Mammary epithelial cell (primary cell): ENCODE measurements at regions of chr10 and their contacts with region 1.

Region 1: DNA sequence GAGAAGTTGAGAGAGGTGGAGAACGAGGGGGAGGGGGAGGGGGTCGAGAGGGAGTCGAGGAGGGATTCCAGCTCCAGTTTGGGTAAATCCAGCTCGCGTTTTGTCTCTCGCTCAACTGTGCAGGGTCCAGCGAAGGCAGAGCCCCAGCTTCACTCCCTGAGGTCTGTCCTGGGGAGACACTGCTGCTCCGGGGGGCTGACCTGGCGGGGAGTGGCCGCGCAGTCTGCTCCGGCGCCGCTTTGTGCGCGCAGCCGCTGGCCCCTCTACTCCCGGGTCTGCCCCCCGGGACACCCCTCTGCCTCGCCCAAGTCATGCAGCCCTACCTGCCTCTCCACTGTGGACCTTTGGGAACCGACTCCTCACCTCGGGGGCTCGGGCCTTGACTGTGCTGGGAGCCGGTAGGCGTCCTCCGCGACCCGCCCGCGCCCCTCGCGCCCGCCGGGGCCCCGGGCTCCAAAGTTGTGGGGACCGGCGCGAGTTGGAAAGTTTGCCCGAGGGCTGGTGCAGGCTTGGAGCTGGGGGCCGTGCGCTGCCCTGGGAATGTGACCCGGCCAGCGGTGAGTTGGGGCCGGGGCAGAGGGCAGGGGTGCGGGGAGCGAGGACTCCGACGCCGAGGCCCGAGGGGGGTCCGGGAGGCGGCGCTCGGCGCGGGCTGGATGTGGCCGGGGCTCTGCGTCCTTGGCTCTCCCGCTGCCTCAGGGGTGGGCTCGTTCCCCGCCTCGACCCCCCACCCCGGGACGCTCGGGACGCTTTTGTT is at the start of gene TET1:
- DNase-seq: peak; percentile 35
- H3K4me3 ChIP-seq: peak within 1 kb of the TSS; percentile 50 to 59 (median 59)
- H3K27ac ChIP-seq: no peak within 1 kb of the TSS
- H3K4me1 ChIP-seq: peaks cover 6% of the 10 kb centered on the region
- H3K27me3 ChIP-seq: no peaks in the 10 kb centered on the region
- CTCF ChIP-seq: no peak
- total RNA-seq, gene TET1: 0.75 to 1.8 TPM

Region 2: DNA sequence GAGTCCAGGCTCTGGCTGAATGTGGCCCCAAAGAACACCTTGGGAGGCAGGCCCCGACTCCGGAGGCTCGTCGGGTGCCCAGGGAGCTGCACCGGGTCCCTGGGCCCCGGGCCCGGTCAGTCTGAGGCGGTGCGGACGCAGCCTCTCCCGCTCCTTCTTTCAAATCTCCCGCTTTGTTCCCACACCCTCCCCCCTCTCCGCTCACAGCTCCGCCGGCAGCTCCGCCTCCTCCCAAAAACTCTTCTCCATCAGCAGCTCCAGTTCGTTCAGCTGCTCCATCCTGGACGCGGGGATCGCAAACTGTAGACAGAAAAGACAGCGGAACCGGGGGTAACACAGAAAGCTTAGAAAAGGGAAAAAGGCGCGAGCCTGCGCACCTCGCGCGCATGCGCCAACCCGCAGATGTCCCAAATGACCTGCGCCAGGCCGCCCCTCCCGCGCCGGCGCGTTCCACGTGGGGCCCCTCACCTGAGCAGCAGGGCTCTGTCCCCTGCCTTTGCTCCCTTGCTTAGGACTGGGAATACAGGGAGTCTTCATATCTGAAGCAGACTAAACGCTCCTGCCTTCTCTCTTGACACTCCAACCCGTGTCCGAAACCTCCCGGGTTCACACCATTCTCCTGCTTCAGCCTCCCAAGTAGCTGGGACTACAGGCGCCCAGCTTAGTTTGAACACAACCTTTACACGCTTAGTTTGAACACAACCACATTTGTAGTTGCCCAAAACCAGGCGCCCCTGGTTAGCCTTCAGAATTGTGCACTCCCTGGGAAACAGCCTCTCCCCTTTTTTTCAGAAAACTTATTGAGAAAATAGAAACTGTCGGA is 88.6 kb before region 1 on chr10 and contains the start of gene DNA2:
- CTCF ChIA-PET with region 1: no interaction called
- dilution Hi-C with region 1: loop called (anchors 5 kb)
- in situ Hi-C with region 1: no loop called
- intact Hi-C with region 1: no loop called
- DNase-seq: peak; percentile 75
- H3K4me3 ChIP-seq: peak within 1 kb of the TSS; percentile 80 to 94 (median 83)
- H3K27ac ChIP-seq: peak within 1 kb of the TSS; percentile 82
- H3K4me1 ChIP-seq: peaks cover 5% of the 10 kb centered on the region
- H3K27me3 ChIP-seq: no peaks in the 10 kb centered on the region
- CTCF ChIP-seq: no peak
- total RNA-seq, gene DNA2: 3.8 to 10.3 TPM

Region 3: GRCh38 chr10:68600041-68600778 is 39.8 kb after region 1 on chr10:
- CTCF ChIA-PET with region 1: no interaction called
- dilution Hi-C with region 1: no loop called
- in situ Hi-C with region 1: no loop called
- intact Hi-C with region 1: loop called (anchors 1 kb)
- DNase-seq: peak; percentile 90
- H3K4me3 ChIP-seq: peak overlapping the region; percentile 26 to 49 (median 44)
- H3K27ac ChIP-seq: peak overlapping the region; percentile 44
- H3K4me1 ChIP-seq: peaks cover 21% of the 10 kb centered on the region
- H3K27me3 ChIP-seq: no peaks in the 10 kb centered on the region
- CTCF ChIP-seq: no peak

Region 4: DNA sequence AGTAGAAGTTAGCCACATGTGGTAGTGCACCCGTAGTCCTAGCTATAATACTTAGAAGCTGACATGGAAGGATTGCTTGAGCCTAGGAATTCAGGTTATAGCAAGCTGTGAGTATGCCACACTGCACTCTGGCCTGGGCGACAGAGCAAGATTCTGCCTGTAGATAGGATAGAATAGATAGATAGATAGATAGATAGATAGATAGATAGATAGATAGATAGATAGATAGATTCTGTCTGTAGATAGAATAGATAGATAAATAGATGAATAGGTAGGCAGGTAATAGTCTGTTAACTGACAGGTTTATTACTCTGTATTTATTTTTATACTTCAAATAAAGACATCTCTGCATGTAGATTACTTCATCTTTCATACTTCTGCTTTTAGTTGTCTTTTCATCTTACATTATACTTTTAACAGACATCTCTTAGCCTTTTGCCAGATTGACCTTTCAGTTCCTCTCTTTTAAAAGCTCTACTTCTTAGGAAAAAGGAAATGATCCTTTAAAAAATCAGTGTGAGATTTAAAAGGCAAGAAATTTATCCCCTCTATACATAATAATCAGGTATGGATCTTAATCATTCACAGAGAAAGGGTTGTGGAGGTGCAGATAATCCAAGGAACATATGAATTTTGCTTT is 192.5 kb after region 1 on chr10:
- CTCF ChIA-PET with region 1: no interaction called
- dilution Hi-C with region 1: no loop called
- in situ Hi-C with region 1: no loop called
- intact Hi-C with region 1: no loop called
- DNase-seq: no peak
- H3K4me3 ChIP-seq: no peak overlapping the region
- H3K27ac ChIP-seq: no peak overlapping the region
- H3K4me1 ChIP-seq: no peaks in the 10 kb centered on the region
- H3K27me3 ChIP-seq: no peaks in the 10 kb centered on the region
- CTCF ChIP-seq: no peak